Heart right ventricle (tissue), 16 donors: ENCODE measurements at regions of chr20 and their contacts with region 1.

Region 1: DNA sequence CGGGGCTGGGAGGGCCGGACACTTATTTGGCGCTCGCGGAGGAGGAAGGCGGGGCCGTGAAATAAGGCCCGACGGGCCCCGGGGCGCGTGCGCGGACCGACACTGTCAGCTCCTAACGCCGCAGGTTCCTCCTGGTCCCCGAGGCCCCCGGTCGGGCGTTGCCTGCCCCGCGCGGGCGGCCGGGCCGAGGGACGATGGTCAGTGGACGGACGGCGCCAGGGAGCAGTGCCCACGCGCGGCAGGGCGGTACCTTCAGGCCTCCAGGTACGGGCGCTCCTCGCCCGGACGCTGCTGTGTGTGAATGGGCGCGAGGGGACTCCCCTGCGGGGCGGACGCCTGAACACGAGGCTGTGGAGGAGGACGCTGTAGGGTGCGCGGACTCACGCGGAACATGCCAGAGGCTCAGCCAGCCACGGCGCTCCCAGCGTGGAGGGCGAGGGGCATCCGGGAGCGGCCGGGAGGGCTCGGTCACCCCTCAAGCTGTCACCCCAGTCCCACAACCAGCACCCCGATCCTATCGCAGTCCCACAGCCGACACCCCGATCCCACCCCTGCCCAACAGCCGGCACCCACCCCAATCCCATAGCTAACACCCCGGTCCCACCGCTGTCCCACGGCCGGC is 339 bp upstream of the GMEB2 start:
- DNase-seq: peak; percentile 94 to 95
- ATAC-seq: peak; percentile 90 to 94 (median 92)
- H3K4me3 ChIP-seq: peak overlapping the region; percentile 65 to 99 (median 92)
- H3K27ac ChIP-seq: peak overlapping the region; percentile 90 to 99 (median 97)
- H3K4me1 ChIP-seq: peaks cover 0 to 33% (median 24%) of the 10 kb centered on the region in 9 donors
- H3K27me3 ChIP-seq: no peaks in the 10 kb centered on the region
- CTCF ChIP-seq: no peak

Region 2: GRCh38 chr20:63529861-63530788 is 97.1 kb before region 1 on chr20:
- intact Hi-C with region 1: loop called in 1 of 10 experiments (anchors 5 kb)
- DNase-seq: no peak
- ATAC-seq: peak in 1 of 8 donors; percentile 18
- H3K4me3 ChIP-seq: no peak overlapping the region
- H3K27ac ChIP-seq: no peak overlapping the region
- H3K4me1 ChIP-seq: peaks cover 0 to 7% (median 0%) of the 10 kb centered on the region in 9 donors
- H3K27me3 ChIP-seq: peaks cover 0 to 20% (median 16%) of the 10 kb centered on the region in 7 donors
- CTCF ChIP-seq: no peak

Region 3: DNA sequence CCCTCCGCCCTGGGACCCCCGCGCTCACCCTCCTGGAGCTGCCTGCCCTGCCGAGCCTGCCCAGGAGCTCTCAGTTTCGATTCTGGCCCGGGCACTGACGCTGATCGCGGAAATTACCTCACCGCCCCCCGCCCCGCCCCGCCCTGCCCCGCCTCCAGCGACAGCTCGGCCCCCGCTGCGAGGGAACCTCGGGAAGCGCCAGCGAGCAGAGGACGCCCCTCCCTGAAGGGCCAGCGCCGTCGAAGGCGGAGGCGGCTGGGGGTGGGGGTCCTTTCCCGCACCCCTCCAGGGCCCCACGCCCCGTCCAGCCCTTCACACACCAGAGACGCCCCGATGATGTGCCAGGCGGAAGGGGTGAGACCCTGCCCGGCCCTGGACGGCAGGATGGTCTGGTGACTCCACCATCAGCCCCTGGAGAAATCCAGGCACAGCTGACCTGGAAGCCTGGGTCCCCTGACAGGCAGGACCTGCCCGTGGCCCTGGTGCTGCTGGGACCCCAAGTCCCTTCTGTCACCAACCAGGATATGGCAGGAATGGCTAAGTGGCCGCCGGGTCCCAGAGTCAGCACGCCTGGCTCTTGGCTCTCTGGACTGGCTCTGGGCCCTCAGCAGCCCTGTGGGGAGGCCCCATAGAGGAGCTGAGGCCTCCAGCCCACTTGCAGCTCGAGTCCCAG is 52.9 kb before region 1 on chr20 and contains the start of gene HELZ2:
- intact Hi-C with region 1: loop called in 3 of 10 experiments (anchors 5 to 10 kb)
- DNase-seq: peak; percentile 79 to 82
- ATAC-seq: peak; percentile 78 to 91 (median 84)
- H3K4me3 ChIP-seq: peak within 1 kb of the TSS; percentile 67 to 98 (median 86)
- H3K27ac ChIP-seq: peak within 1 kb of the TSS; percentile 43 to 95 (median 92)
- H3K4me1 ChIP-seq: peaks cover 5 to 37% (median 24%) of the 10 kb centered on the region in 9 donors
- H3K27me3 ChIP-seq: peaks cover 0 to 34% (median 0%) of the 10 kb centered on the region in 7 donors
- CTCF ChIP-seq: no peak
- total RNA-seq, gene HELZ2: 10.8 to 34.3 (median 12.7) TPM

Region 4: GRCh38 chr20:63657937-63658748 is 30.9 kb after region 1 on chr20 and contains the start of gene RTEL1:
- intact Hi-C with region 1: loop called in 2 of 10 experiments (anchors 1 kb)
- DNase-seq: peak; percentile 92
- ATAC-seq: peak; percentile 94 to 98 (median 96)
- H3K4me3 ChIP-seq: peak within 1 kb of the TSS; percentile 38 to 89 (median 72)
- H3K27ac ChIP-seq: peak within 1 kb of the TSS; percentile 73 to 95 (median 90)
- H3K4me1 ChIP-seq: peaks cover 8 to 36% (median 29%) of the 10 kb centered on the region in 9 donors
- H3K27me3 ChIP-seq: peaks cover 0 to 3% (median 0%) of the 10 kb centered on the region in 7 donors
- CTCF ChIP-seq: peak in 1 of 9 donors; percentile 25
- total RNA-seq, gene RTEL1: 6.1 to 14.5 (median 10.3) TPM